Calu3 (cell line): ENCODE measurements at regions of chr5 and their contacts with region 1.

Region 1: GRCh38 chr5:140143521-140144258 is 18.0 kb downstream of the IGIP start:
- DNase-seq: no peak
- H3K4me3 Mint-ChIP-seq: no peak overlapping the region
- H3K27ac Mint-ChIP-seq: no peak overlapping the region
- H3K4me1 Mint-ChIP-seq: peaks cover 15% of the 10 kb centered on the region
- H3K27me3 Mint-ChIP-seq: peaks cover 39% of the 10 kb centered on the region
- CTCF ChIP-seq: no peak

Region 2: GRCh38 chr5:140118294-140118936 is 25.3 kb before region 1 on chr5:
- CTCF ChIA-PET with region 1: interaction called, 12 read pairs
- intact Hi-C with region 1: no loop called
- DNase-seq: no peak
- H3K4me3 Mint-ChIP-seq: peak overlapping the region; percentile 26
- H3K27ac Mint-ChIP-seq: no peak overlapping the region
- H3K4me1 Mint-ChIP-seq: peaks cover 42% of the 10 kb centered on the region
- H3K27me3 Mint-ChIP-seq: peaks cover 3% of the 10 kb centered on the region
- CTCF ChIP-seq: no peak

Region 3: GRCh38 chr5:140131967-140132409 is 11.7 kb before region 1 on chr5:
- CTCF ChIA-PET with region 1: interaction called, 11 read pairs
- intact Hi-C with region 1: no loop called
- DNase-seq: peak; percentile 36
- H3K4me3 Mint-ChIP-seq: no peak overlapping the region
- H3K27ac Mint-ChIP-seq: no peak overlapping the region
- H3K4me1 Mint-ChIP-seq: peaks cover 11% of the 10 kb centered on the region
- H3K27me3 Mint-ChIP-seq: no peaks in the 10 kb centered on the region
- CTCF ChIP-seq: no peak